ENCODE measurements at regions of chr11 and their contacts with region 1.

Region 1: GRCh38 chr11:18526521-18527296 is at the start of gene TSG101:
- DNase-seq: peak; percentile 93 to 99 (median 96)

Region 2: DNA sequence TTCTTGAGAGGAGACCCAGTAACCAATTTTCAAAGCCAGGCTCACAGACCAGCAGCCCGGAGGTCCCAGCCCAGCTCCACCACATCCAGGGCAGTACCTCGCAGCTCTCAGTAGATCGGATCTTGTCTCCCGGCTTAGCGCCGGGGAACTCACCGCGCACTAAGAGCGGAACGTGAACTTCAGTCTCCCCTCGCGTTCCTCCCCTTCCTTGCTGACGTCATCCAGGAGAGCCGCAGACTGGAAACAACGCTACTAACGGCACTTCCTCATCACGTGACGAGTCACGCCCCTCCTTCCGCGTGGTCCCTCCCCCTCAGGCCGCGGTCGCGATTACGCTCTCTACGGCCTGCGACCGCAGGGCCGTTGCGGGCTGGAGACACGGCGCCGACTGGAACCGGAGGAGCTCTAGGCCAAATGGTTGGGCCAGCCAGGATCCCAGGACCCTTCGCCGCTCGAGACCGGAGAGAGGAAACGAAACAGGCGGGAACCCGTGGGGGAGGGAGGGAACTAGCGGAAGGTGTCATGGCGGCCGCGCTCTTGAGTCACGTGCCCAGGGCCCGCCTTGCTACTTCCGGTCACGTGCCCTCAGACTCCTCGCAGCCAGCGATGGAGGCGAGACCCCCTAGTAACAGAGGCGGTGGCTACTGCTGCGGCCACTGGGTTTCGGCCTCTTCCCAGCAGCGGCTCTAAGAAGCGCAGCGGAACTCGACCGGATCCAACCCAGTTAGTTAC is 204.6 kb before region 1 on chr11 and contains the starts of genes GTF2H1 and HPS5:
- intact Hi-C with region 1: loop called (anchors 1 kb)
- DNase-seq: peak; percentile 92 to 99 (median 96)

Region 3: GRCh38 chr11:18395735-18396504 is 130.8 kb before region 1 on chr11:
- intact Hi-C with region 1: loop called (anchors 10 kb)
- DNase-seq: peak; percentile 93 to 99 (median 95)

Measured in posterior cingulate gyrus (tissue), 11 donors.